Activated CD4-positive, alpha-beta memory T cell treated with anti-CD3 and anti-CD28 coated beads for 36 hours (primary cell): ENCODE measurements at regions of chr11 and their contacts with region 1.

Region 1: GRCh38 chr11:44775366-44775984 is 48.7 kb downstream of the TSPAN18 start:
- DNase-seq: peak; percentile 77
- H3K4me3 Mint-ChIP-seq: no peak overlapping the region
- H3K27ac Mint-ChIP-seq: no peak overlapping the region
- H3K4me1 Mint-ChIP-seq: peaks cover 12% of the 10 kb centered on the region
- H3K27me3 Mint-ChIP-seq: no peaks in the 10 kb centered on the region

Region 2: DNA sequence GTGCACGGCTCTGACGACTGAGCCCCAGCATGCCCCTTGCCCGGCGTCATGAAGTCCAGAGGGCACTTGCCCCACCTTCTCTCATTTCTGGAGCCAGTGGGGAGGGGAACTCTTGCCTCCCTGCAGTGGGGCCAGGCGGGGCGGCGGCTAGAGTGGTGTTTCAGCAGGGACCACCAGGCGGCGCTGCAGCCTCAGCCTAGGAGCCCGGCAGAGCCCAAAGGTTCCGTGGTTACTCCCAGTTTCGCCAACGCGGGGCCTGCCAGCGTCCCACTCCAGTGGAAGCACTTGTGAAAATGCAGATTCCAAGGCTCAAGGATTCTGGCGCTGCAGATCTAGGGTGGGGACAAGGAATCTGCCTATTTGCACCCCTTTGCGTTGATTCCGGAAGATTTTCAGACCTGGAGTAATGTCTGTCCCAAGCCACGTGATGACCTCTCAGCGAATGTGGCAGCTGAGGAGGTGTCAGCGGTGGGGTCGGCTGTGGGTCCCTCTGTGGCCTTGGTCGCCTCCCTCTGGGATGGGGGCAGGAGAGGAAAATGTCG is 154.3 kb before region 1 on chr11:
- CTCF ChIA-PET with region 1: interaction called, 33 read pairs
- POLR2A ChIA-PET with region 1: no interaction called
- intact Hi-C with region 1: no loop called
- DNase-seq: peak; percentile 75
- H3K4me3 Mint-ChIP-seq: no peak overlapping the region
- H3K27ac Mint-ChIP-seq: peak overlapping the region; percentile 9
- H3K4me1 Mint-ChIP-seq: peaks cover 36% of the 10 kb centered on the region
- H3K27me3 Mint-ChIP-seq: no peaks in the 10 kb centered on the region

Region 3: GRCh38 chr11:44727373-44728287 is 47.8 kb before region 1 on chr11:
- CTCF ChIA-PET with region 1: interaction called, 26 read pairs
- POLR2A ChIA-PET with region 1: interaction called, 3 read pairs
- intact Hi-C with region 1: loop called (anchors 1 kb)
- DNase-seq: peak; percentile 88
- H3K4me3 Mint-ChIP-seq: peak overlapping the region; percentile 82
- H3K27ac Mint-ChIP-seq: peak overlapping the region; percentile 67
- H3K4me1 Mint-ChIP-seq: peaks cover 51% of the 10 kb centered on the region
- H3K27me3 Mint-ChIP-seq: no peaks in the 10 kb centered on the region

Region 4: DNA sequence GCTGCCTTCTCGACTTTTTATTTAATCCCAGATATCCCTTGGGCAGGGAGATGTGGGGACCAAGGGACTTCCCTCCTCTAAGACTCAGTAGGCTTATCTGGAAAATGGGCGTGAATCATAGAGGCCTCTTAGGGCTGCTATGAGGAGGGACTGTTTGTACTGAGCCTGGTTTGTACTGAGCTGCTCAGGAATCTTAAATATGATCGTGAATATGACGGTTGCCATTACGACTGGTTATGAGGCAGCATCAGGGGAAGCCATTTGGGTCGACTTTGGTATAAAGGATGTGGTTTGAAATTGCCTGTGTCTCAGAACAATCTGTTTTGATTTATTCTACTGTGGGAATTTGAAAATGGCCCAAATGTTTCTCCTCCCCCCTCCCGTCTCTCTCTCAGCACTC is 28.2 kb before region 1 on chr11:
- CTCF ChIA-PET with region 1: interaction called, 16 read pairs
- POLR2A ChIA-PET with region 1: no interaction called
- intact Hi-C with region 1: no loop called
- DNase-seq: no peak
- H3K4me3 Mint-ChIP-seq: no peak overlapping the region
- H3K27ac Mint-ChIP-seq: no peak overlapping the region
- H3K4me1 Mint-ChIP-seq: peaks cover 45% of the 10 kb centered on the region
- H3K27me3 Mint-ChIP-seq: no peaks in the 10 kb centered on the region

Region 5: GRCh38 chr11:44785856-44786606 is 10.6 kb after region 1 on chr11:
- CTCF ChIA-PET with region 1: interaction called, 29 read pairs
- POLR2A ChIA-PET with region 1: no interaction called
- intact Hi-C with region 1: no loop called
- DNase-seq: peak; percentile 20
- H3K4me3 Mint-ChIP-seq: no peak overlapping the region
- H3K27ac Mint-ChIP-seq: no peak overlapping the region
- H3K4me1 Mint-ChIP-seq: no peaks in the 10 kb centered on the region
- H3K27me3 Mint-ChIP-seq: no peaks in the 10 kb centered on the region

Region 6: GRCh38 chr11:44893846-44894617 is 118.6 kb after region 1 on chr11:
- CTCF ChIA-PET with region 1: interaction called, 4 read pairs
- POLR2A ChIA-PET with region 1: no interaction called
- intact Hi-C with region 1: loop called (anchors 5 kb)
- DNase-seq: peak; percentile 72
- H3K4me3 Mint-ChIP-seq: no peak overlapping the region
- H3K27ac Mint-ChIP-seq: no peak overlapping the region
- H3K4me1 Mint-ChIP-seq: peaks cover 9% of the 10 kb centered on the region
- H3K27me3 Mint-ChIP-seq: no peaks in the 10 kb centered on the region